Activated CD4-positive, alpha-beta T cell treated with anti-CD3 and anti-CD28 coated beads for 36 hours (primary cell): ENCODE measurements at regions of chr6 and their contacts with region 1.

Region 1: GRCh38 chr6:47413752-47414422 is 63.7 kb upstream of the CD2AP start:
- DNase-seq: peak; percentile 46
- ATAC-seq: peak; percentile 84
- H3K4me3 Mint-ChIP-seq: peak overlapping the region; percentile 72
- H3K27ac Mint-ChIP-seq: peak overlapping the region; percentile 83
- H3K4me1 Mint-ChIP-seq: peaks cover 14% of the 10 kb centered on the region
- H3K27me3 Mint-ChIP-seq: no peaks in the 10 kb centered on the region

Region 2: DNA sequence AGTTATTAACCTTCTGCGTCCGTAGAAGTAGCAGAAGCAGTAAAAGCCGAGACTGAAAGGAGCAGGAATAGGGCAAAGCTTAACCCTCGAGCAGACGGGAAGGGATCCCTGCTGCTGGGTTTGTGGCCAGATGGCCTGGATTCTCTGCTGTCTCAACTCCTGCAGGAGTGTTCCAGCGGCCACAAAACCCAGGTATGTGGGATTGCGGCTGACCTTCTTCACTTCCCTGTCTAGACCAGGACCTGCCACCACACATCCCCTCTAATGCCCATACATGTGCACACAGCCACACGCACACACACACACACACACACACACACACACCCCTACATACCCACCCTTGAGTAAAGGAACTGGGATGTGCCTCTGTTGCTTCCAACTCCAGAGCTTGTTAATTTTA is 71.1 kb before region 1 on chr6:
- CTCF ChIA-PET with region 1: no interaction called
- POLR2A ChIA-PET with region 1: no interaction called
- intact Hi-C with region 1: no loop called
- DNase-seq: no peak
- ATAC-seq: no peak
- H3K4me3 Mint-ChIP-seq: no peak overlapping the region
- H3K27ac Mint-ChIP-seq: no peak overlapping the region
- H3K4me1 Mint-ChIP-seq: no peaks in the 10 kb centered on the region
- H3K27me3 Mint-ChIP-seq: peaks cover 7% of the 10 kb centered on the region

Region 3: DNA sequence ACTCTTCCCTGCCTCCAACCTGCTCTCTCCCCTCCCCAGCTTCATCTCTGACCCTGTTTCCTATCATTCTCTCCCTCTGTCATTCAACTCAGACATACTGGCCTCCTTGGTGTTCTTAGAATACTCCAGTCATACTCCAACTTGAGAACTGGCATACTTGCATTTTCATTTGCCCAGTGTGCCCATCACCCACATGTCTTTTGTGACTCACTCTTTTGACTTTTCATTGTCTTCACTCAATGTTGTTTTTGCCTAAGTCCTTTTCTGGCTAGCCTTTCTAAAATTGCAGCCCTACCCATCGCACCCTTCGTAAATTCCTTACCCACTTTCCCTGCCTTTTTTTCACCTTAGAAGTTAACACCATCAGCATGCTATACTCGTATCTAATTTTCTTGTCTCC is 13.3 kb before region 1 on chr6:
- CTCF ChIA-PET with region 1: interaction called, 10 read pairs
- POLR2A ChIA-PET with region 1: no interaction called
- intact Hi-C with region 1: no loop called
- DNase-seq: no peak
- ATAC-seq: no peak
- H3K4me3 Mint-ChIP-seq: no peak overlapping the region
- H3K27ac Mint-ChIP-seq: no peak overlapping the region
- H3K4me1 Mint-ChIP-seq: no peaks in the 10 kb centered on the region
- H3K27me3 Mint-ChIP-seq: no peaks in the 10 kb centered on the region

Region 4: DNA sequence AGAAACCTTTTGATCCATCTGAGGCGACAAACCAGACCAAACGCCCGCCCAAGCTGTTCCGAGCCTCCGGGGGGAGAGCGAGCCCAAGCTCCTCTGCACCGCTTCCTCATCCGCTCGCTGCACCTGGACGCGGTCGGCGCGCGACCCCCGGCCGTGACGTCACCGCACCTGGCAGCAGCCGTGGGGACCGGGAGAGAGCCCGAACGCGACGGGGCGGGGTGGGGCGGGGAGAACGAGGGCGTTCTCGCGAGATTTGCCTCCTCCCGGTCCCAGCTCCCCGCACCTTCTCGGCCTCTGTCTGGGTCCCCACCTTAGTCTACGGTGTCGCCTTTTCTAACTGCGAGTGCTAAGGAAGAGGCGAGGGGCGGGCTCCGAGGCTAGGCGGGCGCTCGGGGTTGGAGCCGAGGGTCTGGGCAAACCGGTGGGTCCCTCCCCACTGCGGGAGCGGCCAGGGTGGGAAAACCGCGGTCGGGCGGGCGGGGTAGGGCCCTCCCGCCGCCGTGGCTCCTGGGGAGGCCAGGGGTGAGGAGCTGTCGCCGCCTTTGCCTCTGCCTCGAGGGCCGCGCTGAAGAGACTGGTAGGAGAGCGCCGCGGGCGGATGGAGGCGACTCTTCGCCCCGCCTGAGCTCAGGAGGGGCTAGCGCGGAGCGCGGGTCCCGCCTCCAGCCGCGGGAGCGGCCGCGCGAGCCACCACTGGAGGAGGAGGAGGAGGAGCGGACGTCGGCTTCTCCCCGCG is 63.8 kb after region 1 on chr6 and contains the start of gene CD2AP:
- CTCF ChIA-PET with region 1: interaction called, 6 read pairs
- POLR2A ChIA-PET with region 1: no interaction called
- intact Hi-C with region 1: loop called (anchors 1 to 2 kb)
- DNase-seq: peak; percentile 93
- ATAC-seq: peak; percentile 87
- H3K4me3 Mint-ChIP-seq: peak within 1 kb of the TSS; percentile 97
- H3K27ac Mint-ChIP-seq: peak within 1 kb of the TSS; percentile 98
- H3K4me1 Mint-ChIP-seq: peaks cover 30% of the 10 kb centered on the region
- H3K27me3 Mint-ChIP-seq: no peaks in the 10 kb centered on the region
- total RNA-seq, gene CD2AP: 28.4 to 29.3 TPM

Region 5: GRCh38 chr6:47621838-47622449 is 208.1 kb after region 1 on chr6:
- CTCF ChIA-PET with region 1: no interaction called
- POLR2A ChIA-PET with region 1: no interaction called
- intact Hi-C with region 1: loop called in 1 of 2 experiments (anchors 5 kb)
- DNase-seq: no peak
- ATAC-seq: no peak
- H3K4me3 Mint-ChIP-seq: no peak overlapping the region
- H3K27ac Mint-ChIP-seq: no peak overlapping the region
- H3K4me1 Mint-ChIP-seq: no peaks in the 10 kb centered on the region
- H3K27me3 Mint-ChIP-seq: no peaks in the 10 kb centered on the region

Region 6: DNA sequence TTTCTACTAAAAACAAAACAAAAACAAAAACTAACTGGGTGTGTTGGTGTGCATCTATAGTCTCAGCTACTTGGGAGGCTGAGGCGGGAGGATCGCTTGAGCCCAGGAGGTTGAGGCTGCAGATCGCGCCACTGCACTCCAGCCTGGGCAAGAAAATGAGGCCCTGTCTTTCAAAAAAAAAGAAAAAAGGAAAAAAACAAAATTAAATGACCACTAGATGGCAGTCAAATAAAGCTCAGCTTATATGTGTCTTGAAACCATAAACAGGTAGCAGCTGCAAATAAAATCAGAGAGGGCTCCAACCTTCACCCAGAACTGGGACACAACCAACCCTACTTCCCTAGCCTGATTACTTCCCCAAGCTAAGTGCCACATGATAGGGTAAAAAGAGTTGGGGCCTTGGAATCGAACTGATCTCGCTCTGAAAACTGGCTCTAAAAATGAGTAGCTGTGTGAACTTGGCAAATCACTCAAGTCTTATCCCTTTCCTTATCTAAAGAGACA is 217.4 kb after region 1 on chr6:
- CTCF ChIA-PET with region 1: interaction called, 5 read pairs
- POLR2A ChIA-PET with region 1: no interaction called
- intact Hi-C with region 1: loop called (anchors 1 kb)
- DNase-seq: peak; percentile 30
- ATAC-seq: peak; percentile 68
- H3K4me3 Mint-ChIP-seq: no peak overlapping the region
- H3K27ac Mint-ChIP-seq: no peak overlapping the region
- H3K4me1 Mint-ChIP-seq: peaks cover 11% of the 10 kb centered on the region
- H3K27me3 Mint-ChIP-seq: no peaks in the 10 kb centered on the region

Region 7: DNA sequence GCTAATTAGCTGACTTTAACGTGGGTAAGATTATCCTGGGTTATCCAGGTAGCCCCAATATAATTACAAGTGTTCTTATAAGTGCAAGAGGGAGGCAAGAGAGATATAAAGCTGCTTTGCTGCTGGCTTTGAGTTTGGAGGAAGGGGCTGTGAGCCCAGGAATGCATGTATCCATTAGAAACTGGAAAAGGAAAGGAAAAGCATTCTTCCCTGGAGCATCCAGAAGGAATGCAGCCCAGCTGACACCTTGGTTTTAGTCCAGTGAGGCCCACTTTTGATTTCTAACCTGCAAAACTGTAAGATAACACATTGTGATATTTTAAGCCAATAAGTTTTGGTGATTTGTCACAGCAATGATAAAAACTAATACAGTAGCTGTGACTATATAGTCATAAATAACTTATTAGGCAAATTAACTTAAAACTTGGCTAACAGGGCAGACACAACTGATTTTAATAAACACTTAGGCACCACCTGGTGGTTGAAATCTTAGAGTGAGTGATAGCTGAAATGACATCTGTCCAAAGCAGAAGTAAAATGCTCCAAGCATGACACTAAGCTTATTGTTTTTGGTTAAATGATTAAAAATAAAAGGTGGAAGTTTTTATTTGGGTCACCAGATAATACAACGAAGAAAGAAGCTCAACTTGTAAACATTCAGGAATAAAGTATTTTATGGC is 320.1 kb after region 1 on chr6:
- CTCF ChIA-PET with region 1: interaction called, 5 read pairs
- POLR2A ChIA-PET with region 1: no interaction called
- intact Hi-C with region 1: loop called (anchors 1 to 5 kb)
- DNase-seq: no peak
- ATAC-seq: no peak
- H3K4me3 Mint-ChIP-seq: no peak overlapping the region
- H3K27ac Mint-ChIP-seq: no peak overlapping the region
- H3K4me1 Mint-ChIP-seq: peaks cover 7% of the 10 kb centered on the region
- H3K27me3 Mint-ChIP-seq: peaks cover 13% of the 10 kb centered on the region

Region 8: GRCh38 chr6:47780510-47781356 is 366.8 kb after region 1 on chr6:
- CTCF ChIA-PET with region 1: interaction called, 8 read pairs
- POLR2A ChIA-PET with region 1: no interaction called
- intact Hi-C with region 1: loop called (anchors 1 kb)
- DNase-seq: peak; percentile 65
- ATAC-seq: peak; percentile 98
- H3K4me3 Mint-ChIP-seq: no peak overlapping the region
- H3K27ac Mint-ChIP-seq: no peak overlapping the region
- H3K4me1 Mint-ChIP-seq: peaks cover 5% of the 10 kb centered on the region
- H3K27me3 Mint-ChIP-seq: peaks cover 3% of the 10 kb centered on the region